ENCODE measurements at regions of chr2 and their contacts with region 1.

Region 1: GRCh38 chr2:190740449-190740848 is 91.6 kb downstream of the NAB1 start:
- DNase-seq: no peak
- ATAC-seq: peak; percentile 79
- H3K4me3 ChIP-seq: no peak overlapping the region
- H3K27ac ChIP-seq: no peak overlapping the region
- H3K4me1 ChIP-seq: no peaks in the 10 kb centered on the region
- H3K27me3 ChIP-seq: no peaks in the 10 kb centered on the region
- CTCF ChIP-seq: no peak
- EP300 ChIP-seq: no peak
- POLR2A ChIP-seq: no peak
- RAD21 ChIP-seq: no peak

Region 2: GRCh38 chr2:189848276-189848675 is 892.2 kb before region 1 on chr2:
- CTCF ChIA-PET with region 1: no interaction called
- POLR2A ChIA-PET with region 1: no interaction called
- RAD21 ChIA-PET with region 1: no interaction called
- SMC1A ChIA-PET with region 1: no interaction called
- in situ Hi-C with region 1: no loop called
- intact Hi-C with region 1: no loop called
- DNase-seq: no peak
- ATAC-seq: no peak
- H3K4me3 ChIP-seq: no peak overlapping the region
- H3K27ac ChIP-seq: no peak overlapping the region
- H3K4me1 ChIP-seq: no peaks in the 10 kb centered on the region
- H3K27me3 ChIP-seq: no peaks in the 10 kb centered on the region
- CTCF ChIP-seq: no peak
- EP300 ChIP-seq: no peak
- POLR2A ChIP-seq: no peak
- RAD21 ChIP-seq: no peak

Region 3: GRCh38 chr2:190726255-190726654 is 14.2 kb before region 1 on chr2:
- CTCF ChIA-PET with region 1: interaction called, 10 read pairs
- POLR2A ChIA-PET with region 1: interaction called, 6 read pairs
- RAD21 ChIA-PET with region 1: interaction called, 5 read pairs
- SMC1A ChIA-PET with region 1: interaction called, 11 read pairs
- in situ Hi-C with region 1: no loop called
- intact Hi-C with region 1: no loop called
- DNase-seq: no peak
- ATAC-seq: no peak
- H3K4me3 ChIP-seq: no peak overlapping the region
- H3K27ac ChIP-seq: no peak overlapping the region
- H3K4me1 ChIP-seq: peaks cover 16% of the 10 kb centered on the region
- H3K27me3 ChIP-seq: no peaks in the 10 kb centered on the region
- CTCF ChIP-seq: no peak
- EP300 ChIP-seq: no peak
- POLR2A ChIP-seq: no peak
- RAD21 ChIP-seq: no peak

Region 4: DNA sequence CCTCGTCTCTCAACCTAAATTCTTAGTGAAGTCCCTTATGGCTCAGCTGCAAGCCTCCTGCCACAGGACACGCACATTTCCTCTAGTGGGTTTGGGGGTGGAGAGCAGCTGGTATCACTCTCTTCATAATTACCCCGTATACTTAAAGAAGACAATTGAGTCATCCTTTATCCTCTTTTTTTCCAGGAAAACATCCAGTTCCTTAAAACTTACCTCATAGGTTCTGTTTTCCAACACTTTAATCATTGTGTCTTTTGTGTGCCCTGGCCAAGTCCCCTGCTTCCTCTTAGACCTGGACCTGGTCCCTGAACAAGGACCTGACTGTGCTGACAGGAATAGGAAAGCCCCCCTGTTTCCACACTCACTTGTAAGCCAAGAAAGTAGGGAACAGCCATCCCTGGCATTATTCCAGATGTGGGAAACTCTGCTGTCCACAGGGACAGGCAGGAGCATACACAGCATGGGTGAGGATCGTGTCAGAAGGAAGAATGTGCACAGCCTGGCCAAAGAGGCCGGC is 462.5 kb after region 1 on chr2:
- CTCF ChIA-PET with region 1: no interaction called
- POLR2A ChIA-PET with region 1: no interaction called
- RAD21 ChIA-PET with region 1: no interaction called
- SMC1A ChIA-PET with region 1: no interaction called
- in situ Hi-C with region 1: no loop called
- intact Hi-C with region 1: no loop called
- DNase-seq: no peak
- ATAC-seq: peak; percentile 52
- H3K4me3 ChIP-seq: no peak overlapping the region
- H3K27ac ChIP-seq: no peak overlapping the region
- H3K4me1 ChIP-seq: no peaks in the 10 kb centered on the region
- H3K27me3 ChIP-seq: no peaks in the 10 kb centered on the region
- CTCF ChIP-seq: no peak
- EP300 ChIP-seq: no peak
- POLR2A ChIP-seq: no peak
- RAD21 ChIP-seq: no peak